ENCODE measurements at regions of chr2 and their contacts with region 1.

Region 1: DNA sequence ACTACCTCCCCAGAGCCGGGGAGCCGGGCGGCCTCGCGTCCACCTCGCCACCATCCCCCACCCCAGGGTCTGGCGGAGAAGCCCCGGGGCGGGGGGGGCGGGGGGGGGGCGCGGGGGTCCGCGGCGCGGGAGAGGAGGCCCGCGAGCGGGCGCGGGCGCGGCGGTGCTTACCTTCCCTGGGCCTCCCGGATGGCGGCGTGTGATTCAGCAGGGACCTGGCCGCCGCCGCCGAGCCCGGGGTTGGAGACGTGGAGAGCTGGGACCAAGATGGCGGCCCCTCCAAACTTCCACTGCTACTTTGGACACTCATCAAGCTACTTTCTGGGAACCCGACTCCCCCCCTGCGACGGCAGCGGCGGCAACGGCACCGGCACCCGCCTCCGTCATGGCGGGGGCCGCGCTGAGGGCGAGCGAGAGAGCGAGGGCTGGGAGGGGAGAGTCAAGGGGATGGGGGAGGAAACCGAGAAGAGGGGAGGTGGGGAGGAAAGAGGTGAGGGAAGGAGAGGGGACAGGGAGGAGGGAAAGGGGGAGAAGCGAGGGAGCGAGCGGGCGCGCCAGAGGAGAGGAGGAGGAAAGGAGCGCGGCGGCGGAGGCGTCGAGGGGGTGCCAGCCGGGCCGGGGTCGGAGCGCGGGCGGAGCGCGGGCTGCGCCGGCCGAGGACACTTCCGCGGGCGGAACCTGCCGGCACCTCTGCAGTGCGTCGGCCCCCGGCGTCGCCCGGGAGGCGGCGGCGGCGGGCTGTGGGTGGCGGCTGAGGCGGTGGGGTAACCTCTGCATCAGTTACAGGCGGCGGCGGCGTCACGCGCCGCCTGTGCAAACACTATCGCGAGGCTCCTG is at the start of gene TLK1:
- DNase-seq: peak; percentile 82
- H3K4me3 ChIP-seq: peak within 1 kb of the TSS; percentile 67 to 93 (median 80)
- H3K27ac ChIP-seq: peak within 1 kb of the TSS; percentile 88 to 98 (median 97)
- H3K4me1 ChIP-seq: peaks cover 0 to 37% (median 16%) of the 10 kb centered on the region in 4 donors
- H3K27me3 ChIP-seq: no peaks in the 10 kb centered on the region
- CTCF ChIP-seq: no peak
- EP300 ChIP-seq: no peak
- POLR2A ChIP-seq: no peak
- total RNA-seq, gene TLK1: 37.9 to 60.6 (median 49.0) TPM

Region 2: DNA sequence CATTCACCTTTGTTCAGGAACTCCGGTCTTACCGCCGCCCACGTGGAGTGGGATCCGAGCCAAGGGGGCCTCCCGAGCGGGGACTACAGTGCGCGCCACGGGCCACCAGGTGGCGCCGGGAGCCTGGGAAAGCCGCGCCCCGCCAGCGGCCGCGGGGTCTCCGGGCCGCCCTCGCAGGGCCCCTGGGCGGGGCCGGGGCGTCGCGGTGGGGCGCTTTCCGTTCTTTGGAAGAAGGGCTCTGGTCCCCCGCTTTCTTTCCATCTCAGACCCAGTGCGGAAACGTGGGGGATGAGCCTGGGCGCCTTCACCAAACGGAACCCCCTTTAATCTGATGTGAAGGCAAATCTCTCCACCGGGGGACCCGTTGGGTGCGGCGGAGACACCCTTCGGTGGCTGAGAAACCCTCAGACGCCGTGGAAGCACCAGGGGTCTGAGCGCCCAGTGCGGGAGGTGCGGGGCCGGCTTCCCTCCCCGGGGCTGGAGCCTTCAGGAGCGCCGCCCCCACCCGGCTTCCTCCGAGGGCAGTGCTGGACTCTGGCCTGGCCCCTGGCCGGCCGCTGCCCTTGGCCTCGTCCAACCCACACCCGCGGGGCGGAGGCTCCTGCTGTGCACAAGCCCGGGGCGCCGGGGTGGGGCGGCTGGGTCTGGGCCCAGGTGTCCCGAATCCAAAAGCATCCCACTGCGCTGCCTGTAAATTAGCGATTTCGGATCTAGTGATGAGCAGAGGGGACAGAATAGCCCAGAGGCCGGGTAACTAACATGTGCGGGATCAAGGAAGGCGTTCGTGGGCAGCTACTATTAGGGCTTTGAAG is 186.6 kb before region 1 on chr2:
- intact Hi-C with region 1: loop called (anchors 2 kb)
- DNase-seq: peak; percentile 92
- H3K4me3 ChIP-seq: peak overlapping the region; percentile 61 to 86 (median 74)
- H3K27ac ChIP-seq: peak overlapping the region; percentile 80 to 89 (median 86)
- H3K4me1 ChIP-seq: peaks cover 0 to 18% (median 17%) of the 10 kb centered on the region in 4 donors
- H3K27me3 ChIP-seq: no peaks in the 10 kb centered on the region
- CTCF ChIP-seq: peak in 3 of 4 experiments; percentile 50 to 96 (median 59)
- EP300 ChIP-seq: no peak
- POLR2A ChIP-seq: no peak

Region 3: DNA sequence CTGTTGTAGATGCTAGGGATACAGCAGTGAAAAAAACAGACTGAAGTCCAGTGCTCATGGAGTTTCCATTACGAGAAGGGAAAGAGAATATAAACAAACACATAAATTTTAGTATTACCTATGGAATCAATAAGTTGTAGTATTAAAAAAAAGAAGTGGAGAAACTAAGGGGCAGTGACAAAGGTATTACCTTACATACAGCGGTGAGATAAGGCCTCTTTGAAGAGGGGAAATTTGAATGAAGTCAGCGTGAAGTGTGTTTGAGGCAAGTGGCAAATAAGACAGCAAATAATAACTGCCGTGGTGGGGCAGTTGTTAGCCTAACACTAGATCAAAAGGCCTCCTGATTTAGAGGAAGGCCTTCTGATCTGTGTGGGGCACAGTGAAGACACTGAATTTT is 57.5 kb before region 1 on chr2:
- intact Hi-C with region 1: no loop called
- DNase-seq: no peak
- H3K4me3 ChIP-seq: no peak overlapping the region
- H3K27ac ChIP-seq: no peak overlapping the region
- H3K4me1 ChIP-seq: peaks cover 0 to 6% (median 0%) of the 10 kb centered on the region in 4 donors
- H3K27me3 ChIP-seq: no peaks in the 10 kb centered on the region
- CTCF ChIP-seq: no peak
- EP300 ChIP-seq: no peak
- POLR2A ChIP-seq: no peak

Region 4: GRCh38 chr2:171319164-171319810 is 158.9 kb after region 1 on chr2:
- intact Hi-C with region 1: loop called (anchors 10 kb)
- DNase-seq: no peak
- H3K4me3 ChIP-seq: no peak overlapping the region
- H3K27ac ChIP-seq: peak overlapping the region; percentile 8 to 74 (median 64)
- H3K4me1 ChIP-seq: peaks cover 0 to 54% (median 35%) of the 10 kb centered on the region in 4 donors
- H3K27me3 ChIP-seq: no peaks in the 10 kb centered on the region
- CTCF ChIP-seq: no peak
- EP300 ChIP-seq: no peak
- POLR2A ChIP-seq: no peak

Region 5: DNA sequence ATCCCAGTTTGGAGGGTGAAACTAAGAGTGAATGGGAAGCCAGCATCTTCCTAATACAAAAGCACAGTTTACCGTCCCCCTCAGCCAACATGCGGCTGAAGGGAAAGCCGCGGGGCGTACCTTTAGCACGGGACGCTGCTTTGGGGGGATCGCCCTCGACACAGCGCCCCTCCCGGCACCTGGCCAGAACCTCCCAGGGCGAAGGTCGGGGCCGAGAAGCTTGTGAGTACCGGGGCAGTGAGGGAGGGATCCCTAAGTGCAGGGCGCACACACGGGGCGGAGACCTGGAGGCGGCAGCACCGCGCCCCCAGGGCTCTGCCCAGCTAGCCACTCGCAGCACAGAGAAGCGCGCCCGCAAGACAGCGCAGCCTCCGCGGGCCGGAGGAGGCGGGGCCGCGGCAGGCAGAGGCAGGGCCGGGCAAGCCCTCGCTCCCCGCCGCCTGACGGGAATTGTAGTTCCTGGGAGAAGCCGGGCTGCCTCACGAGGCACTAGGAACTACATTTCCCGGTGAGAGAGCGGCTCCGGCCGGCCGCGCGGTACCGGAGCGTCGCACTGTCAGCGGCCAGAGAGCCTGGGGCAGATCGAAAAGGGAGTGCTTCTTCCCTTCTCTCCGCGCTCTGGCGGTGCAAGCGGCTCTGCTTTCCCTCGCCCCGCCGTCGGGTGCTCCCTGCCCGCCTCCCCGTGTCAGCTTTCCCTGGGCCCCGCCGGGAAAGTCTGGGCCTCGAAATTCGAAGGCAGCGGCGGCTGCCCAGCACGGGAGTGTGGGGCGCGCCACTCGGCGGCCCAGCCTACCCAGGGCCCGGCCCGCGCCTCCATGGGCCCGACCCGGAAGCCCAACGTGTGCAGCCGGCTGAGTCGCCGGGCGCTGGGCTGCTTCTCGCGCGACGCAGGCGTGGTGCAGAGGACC is 273.7 kb after region 1 on chr2 and contains the starts of genes DCAF17 and METTL8:
- intact Hi-C with region 1: loop called (anchors 5 kb)
- DNase-seq: peak; percentile 97
- H3K4me3 ChIP-seq: peak within 1 kb of the TSS; percentile 60 to 88 (median 78)
- H3K27ac ChIP-seq: peak within 1 kb of the TSS; percentile 88 to 99 (median 97)
- H3K4me1 ChIP-seq: peaks cover 0 to 46% (median 33%) of the 10 kb centered on the region in 4 donors
- H3K27me3 ChIP-seq: no peaks in the 10 kb centered on the region
- CTCF ChIP-seq: peak in 1 of 4 experiments; percentile 11
- EP300 ChIP-seq: no peak
- POLR2A ChIP-seq: peak in 1 of 2 donors; percentile 59
- total RNA-seq, gene DCAF17: 19.1 to 27.5 (median 21.9) TPM
- total RNA-seq, gene METTL8: 30.1 to 42.7 (median 40.2) TPM